AG04450 (cell line): ENCODE measurements at regions of chr15 and their contacts with region 1.

Region 1: GRCh38 chr15:61195116-61196002 is 33.7 kb downstream of the RORA start:
- DNase-seq: no peak
- H3K4me3 ChIP-seq: no peak overlapping the region
- H3K27ac ChIP-seq: no peak overlapping the region
- H3K27me3 ChIP-seq: no peaks in the 10 kb centered on the region
- CTCF ChIP-seq: peak; percentile 74

Region 2: DNA sequence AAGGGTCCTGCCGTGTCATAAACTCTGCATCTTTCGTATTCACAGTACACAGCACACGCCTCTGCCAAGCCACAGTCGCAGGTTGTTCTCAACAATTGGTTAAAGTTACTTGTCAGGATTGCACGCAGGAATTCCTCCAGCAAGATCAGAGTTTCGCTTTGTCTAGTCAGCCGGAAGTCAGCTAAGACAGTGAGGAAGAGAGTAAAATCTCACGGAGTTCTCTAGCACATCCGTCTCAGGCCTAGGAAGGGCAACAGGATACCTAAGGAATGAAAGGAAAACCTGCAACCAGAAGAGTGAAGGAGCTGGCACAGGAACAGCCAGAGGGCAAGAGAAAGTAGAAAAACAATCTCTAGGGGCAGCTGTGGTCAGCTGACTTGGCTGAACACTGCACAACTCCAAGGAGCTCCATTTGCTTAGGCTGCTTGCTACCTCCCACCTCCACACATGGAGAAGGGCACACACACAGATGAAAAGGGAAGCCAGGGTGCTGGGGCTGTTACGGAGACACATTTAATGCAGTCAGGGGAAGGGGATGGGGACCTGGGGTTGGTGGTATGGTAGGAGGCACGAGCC is 10.1 kb after region 1 on chr15:
- CTCF ChIA-PET with region 1: interaction called, 18 read pairs
- POLR2A ChIA-PET with region 1: no interaction called
- DNase-seq: no peak
- H3K4me3 ChIP-seq: no peak overlapping the region
- H3K27ac ChIP-seq: no peak overlapping the region
- H3K27me3 ChIP-seq: no peaks in the 10 kb centered on the region
- CTCF ChIP-seq: no peak

Region 3: DNA sequence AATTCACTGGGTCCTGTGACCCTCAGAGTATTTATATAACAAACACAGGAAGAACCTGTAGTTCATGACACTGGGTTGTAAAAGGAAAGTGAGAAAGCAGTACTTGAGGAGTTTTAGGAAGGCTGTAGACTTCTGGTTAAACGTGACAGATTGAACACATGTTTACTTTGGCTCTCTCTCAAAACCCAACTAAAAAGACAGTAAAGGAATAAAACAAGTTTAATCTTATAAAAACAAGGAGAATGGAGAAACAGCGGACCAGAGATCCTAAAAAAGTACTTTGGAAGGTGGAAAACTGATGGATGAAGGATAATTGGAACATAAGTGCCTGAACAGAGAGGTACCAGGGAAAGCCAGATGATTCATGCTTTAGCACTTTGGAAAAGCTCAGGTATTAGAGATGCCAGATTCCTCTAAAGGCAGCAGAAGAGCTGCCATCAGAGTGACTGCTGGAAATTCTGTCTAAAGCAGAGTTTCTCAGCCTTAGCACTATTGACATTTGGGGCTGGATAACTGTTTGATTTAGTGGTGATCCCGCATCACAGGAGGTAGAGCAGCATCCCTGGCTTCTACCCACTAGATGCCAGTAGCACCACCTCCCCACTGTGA is 216.6 kb after region 1 on chr15:
- CTCF ChIA-PET with region 1: no interaction called
- POLR2A ChIA-PET with region 1: no interaction called
- DNase-seq: no peak
- H3K4me3 ChIP-seq: no peak overlapping the region
- H3K27ac ChIP-seq: no peak overlapping the region
- H3K27me3 ChIP-seq: no peaks in the 10 kb centered on the region
- CTCF ChIP-seq: no peak